ENCODE measurements at regions of chr1 and their contacts with region 1.

Region 1: GRCh38 chr1:53182111-53182593 is 14.5 kb upstream of the CPT2 start:
- DNase-seq: peak; percentile 94
- ATAC-seq: peak; percentile 92
- H3K4me3 Mint-ChIP-seq: no peak overlapping the region
- H3K27ac Mint-ChIP-seq: no peak overlapping the region
- H3K4me1 Mint-ChIP-seq: no peaks in the 10 kb centered on the region
- H3K27me3 Mint-ChIP-seq: peaks cover 2% of the 10 kb centered on the region
- CTCF ChIP-seq: peak; percentile 92

Region 2: DNA sequence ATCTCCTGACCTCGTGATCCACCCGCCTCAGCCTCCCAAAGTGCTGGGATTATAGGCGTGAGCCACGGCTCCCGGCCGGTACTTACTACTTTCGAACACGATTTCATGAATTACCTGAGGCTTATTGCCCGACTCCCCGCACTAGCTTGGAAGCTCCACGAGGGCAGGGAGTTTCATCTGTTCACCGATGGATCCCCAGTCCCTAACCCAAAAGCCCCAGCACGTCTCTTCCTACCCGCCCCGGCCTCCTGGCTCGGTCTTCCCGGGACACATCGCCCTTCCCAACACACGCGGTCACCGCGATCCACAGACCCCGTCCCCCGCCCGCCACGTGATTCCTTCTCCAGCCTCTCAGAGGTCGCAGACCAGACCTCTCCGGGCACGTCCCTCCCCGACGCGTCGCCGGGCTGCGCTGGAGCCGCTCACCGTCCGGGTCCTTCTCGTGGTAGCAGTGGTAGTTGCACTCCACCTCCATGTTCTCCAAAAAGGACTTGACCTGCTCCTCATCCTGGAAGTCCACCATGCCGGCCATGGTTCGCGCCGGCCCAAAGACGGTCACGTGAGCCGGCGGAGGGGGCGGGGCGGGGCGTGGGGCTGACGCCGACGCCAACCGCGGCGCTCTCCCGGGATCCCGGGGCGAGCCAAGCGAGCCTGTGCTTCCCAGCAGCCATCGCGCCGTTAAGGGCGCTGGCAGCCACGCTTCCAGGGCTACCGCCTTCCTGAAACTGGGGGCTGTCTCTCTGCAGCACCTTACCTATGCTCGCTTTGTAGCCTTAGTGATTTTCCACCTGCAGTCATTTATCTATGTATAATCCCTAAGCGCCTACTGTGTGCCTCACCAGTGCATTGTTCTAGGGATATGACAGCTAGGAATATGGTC is 484.1 kb before region 1 on chr1 and contains the start of gene COA7:
- CTCF ChIA-PET with region 1: interaction called, 4 read pairs
- POLR2A ChIA-PET with region 1: no interaction called
- intact Hi-C with region 1: loop called (anchors 5 kb)
- DNase-seq: peak; percentile 70
- ATAC-seq: peak; percentile 43
- H3K4me3 Mint-ChIP-seq: peak within 1 kb of the TSS; percentile 83
- H3K27ac Mint-ChIP-seq: peak within 1 kb of the TSS; percentile 88
- H3K4me1 Mint-ChIP-seq: peaks cover 29% of the 10 kb centered on the region
- H3K27me3 Mint-ChIP-seq: no peaks in the 10 kb centered on the region
- CTCF ChIP-seq: no peak
- total RNA-seq, gene COA7: 16.3 to 17.6 TPM

Region 3: GRCh38 chr1:52904927-52905698 is 277.0 kb before region 1 on chr1:
- CTCF ChIA-PET with region 1: interaction called, 17 read pairs
- POLR2A ChIA-PET with region 1: interaction called, 3 read pairs
- intact Hi-C with region 1: loop called (anchors 5 kb)
- DNase-seq: peak; percentile 67
- ATAC-seq: peak; percentile 96
- H3K4me3 Mint-ChIP-seq: no peak overlapping the region
- H3K27ac Mint-ChIP-seq: no peak overlapping the region
- H3K4me1 Mint-ChIP-seq: peaks cover 2% of the 10 kb centered on the region
- H3K27me3 Mint-ChIP-seq: no peaks in the 10 kb centered on the region
- CTCF ChIP-seq: peak; percentile 57

Region 4: GRCh38 chr1:52955129-52955970 is 226.8 kb before region 1 on chr1:
- CTCF ChIA-PET with region 1: no interaction called
- POLR2A ChIA-PET with region 1: no interaction called
- intact Hi-C with region 1: no loop called
- DNase-seq: no peak
- ATAC-seq: no peak
- H3K4me3 Mint-ChIP-seq: no peak overlapping the region
- H3K27ac Mint-ChIP-seq: no peak overlapping the region
- H3K4me1 Mint-ChIP-seq: no peaks in the 10 kb centered on the region
- H3K27me3 Mint-ChIP-seq: no peaks in the 10 kb centered on the region
- CTCF ChIP-seq: no peak

Region 5: DNA sequence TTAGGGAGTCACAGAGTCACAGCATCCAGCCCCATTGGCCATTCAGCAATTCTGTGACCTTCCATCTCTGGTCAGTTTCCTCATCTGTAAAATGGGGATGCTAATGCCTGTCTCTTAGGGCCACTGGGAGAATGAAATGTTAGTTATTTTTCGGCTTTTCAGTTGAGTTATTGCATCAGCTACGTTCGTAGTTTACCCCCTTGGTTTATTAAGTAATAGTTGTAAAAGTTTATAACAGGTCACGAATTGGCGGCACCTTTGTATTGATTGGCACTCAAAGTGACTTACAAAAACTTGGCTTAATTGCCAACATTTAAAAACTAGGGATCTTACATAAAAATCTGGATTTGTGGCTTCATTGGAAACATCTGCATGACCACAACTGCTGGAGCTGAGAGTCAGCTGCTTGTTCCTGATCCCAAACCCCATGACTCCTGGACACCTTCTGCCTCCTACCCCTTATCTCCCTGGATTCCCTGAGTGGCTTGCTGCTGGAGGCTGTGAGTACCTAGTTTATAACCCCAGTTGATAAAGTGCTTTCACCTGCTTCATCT is 16.7 kb before region 1 on chr1:
- CTCF ChIA-PET with region 1: interaction called, 13 read pairs
- POLR2A ChIA-PET with region 1: no interaction called
- intact Hi-C with region 1: no loop called
- DNase-seq: no peak
- ATAC-seq: no peak
- H3K4me3 Mint-ChIP-seq: no peak overlapping the region
- H3K27ac Mint-ChIP-seq: no peak overlapping the region
- H3K4me1 Mint-ChIP-seq: no peaks in the 10 kb centered on the region
- H3K27me3 Mint-ChIP-seq: peaks cover 4% of the 10 kb centered on the region
- CTCF ChIP-seq: no peak

Region 6: DNA sequence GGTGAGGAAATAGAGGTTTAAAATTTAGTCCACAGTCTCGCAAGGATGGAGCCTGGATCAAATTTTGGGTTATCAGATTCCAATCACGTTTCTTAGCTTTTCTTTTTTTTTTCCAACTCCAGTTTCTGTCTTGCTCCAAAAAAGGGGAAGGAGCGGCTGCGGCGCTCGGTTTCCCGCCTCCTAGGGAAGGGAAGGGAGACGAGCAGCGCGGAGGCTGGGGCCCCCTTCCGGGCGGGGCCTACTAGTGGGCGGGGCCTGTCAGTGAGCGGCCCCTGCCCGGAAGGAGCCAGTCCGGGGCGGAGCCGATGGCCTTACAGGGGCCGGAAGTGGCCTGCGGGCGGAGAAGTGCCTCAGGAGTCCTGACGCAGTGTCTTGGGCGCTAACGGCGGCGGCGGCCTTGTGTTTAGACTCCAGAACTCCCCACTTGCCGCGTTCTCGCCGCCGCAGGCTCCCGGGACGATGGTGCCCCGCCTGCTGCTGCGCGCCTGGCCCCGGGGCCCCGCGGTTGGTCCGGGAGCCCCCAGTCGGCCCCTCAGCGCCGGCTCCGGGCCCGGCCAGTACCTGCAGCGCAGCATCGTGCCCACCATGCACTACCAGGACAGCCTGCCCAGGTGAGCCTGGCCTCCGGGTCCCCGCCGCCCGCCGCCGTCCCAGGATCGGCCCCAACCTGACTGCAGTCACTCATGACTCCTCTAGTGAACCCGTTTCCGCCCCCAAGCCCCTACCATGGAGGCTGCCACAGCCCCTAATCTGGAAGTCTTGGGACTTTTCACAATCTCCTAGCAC is 14.5 kb after region 1 on chr1 and contains the start of gene CPT2:
- CTCF ChIA-PET with region 1: interaction called, 30 read pairs
- POLR2A ChIA-PET with region 1: interaction called, 4 read pairs
- intact Hi-C with region 1: no loop called
- DNase-seq: peak; percentile 96
- ATAC-seq: peak; percentile 99
- H3K4me3 Mint-ChIP-seq: peak within 1 kb of the TSS; percentile 99
- H3K27ac Mint-ChIP-seq: peak within 1 kb of the TSS; percentile 98
- H3K4me1 Mint-ChIP-seq: peaks cover 27% of the 10 kb centered on the region
- H3K27me3 Mint-ChIP-seq: no peaks in the 10 kb centered on the region
- CTCF ChIP-seq: no peak
- total RNA-seq, gene CPT2: 17.8 to 18.6 TPM